ENCODE measurements at regions of chr7 and their contacts with region 1.

Region 1: DNA sequence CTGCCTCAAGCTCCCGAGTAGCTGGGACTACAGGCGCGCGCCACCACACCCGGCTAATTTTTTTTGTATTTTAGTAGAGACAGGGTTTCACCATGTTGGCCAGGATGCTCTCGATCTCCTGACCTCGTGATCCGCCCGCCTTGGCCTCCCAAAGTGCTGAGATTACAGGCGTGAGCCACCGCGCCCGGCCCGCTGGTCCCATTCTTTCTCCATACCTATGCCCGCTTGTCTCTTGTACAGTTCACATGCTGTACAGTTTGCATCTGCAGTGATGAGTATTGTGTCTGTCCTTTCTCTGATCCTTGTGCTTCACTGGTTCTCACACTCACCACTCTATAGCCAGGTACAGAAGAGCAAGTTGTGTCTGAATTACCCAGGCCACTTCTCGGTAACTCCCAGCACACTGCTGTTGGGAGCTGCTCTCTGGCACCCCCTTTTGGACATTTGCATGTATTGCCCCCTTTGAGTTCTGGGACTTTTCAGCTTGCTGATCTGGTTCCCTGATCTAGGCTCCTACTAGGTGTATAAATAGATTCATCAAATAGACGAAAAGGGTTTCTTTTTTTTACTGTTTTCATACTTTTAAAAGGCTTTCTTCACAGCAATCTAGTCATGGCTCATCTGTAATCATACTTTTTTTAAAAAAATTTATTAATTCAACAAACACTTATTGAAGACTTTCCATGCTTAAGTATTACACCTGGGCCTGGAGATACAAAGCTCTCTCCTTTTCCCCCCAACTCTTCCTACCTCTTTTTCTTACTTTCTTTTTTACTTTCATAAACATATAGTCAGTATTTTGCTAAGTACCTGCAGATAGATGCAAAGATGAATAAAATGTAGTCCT is 53.5 kb downstream of the AOAH start:
- DNase-seq: peak; percentile 75
- ATAC-seq: peak; percentile 93
- H3K4me3 Mint-ChIP-seq: no peak overlapping the region
- H3K27ac Mint-ChIP-seq: no peak overlapping the region
- H3K4me1 Mint-ChIP-seq: peaks cover 13% of the 10 kb centered on the region
- H3K27me3 Mint-ChIP-seq: no peaks in the 10 kb centered on the region
- CTCF ChIP-seq: peak; percentile 91

Region 2: GRCh38 chr7:36487756-36488336 is 183.0 kb before region 1 on chr7:
- CTCF ChIA-PET with region 1: interaction called, 25 read pairs
- POLR2A ChIA-PET with region 1: no interaction called
- DNase-seq: no peak
- ATAC-seq: peak; percentile 57; the same call in 1 of the 2 replicates
- H3K4me3 Mint-ChIP-seq: no peak overlapping the region
- H3K27ac Mint-ChIP-seq: no peak overlapping the region
- H3K4me1 Mint-ChIP-seq: no peaks in the 10 kb centered on the region
- H3K27me3 Mint-ChIP-seq: no peaks in the 10 kb centered on the region
- CTCF ChIP-seq: peak; percentile 54

Region 3: DNA sequence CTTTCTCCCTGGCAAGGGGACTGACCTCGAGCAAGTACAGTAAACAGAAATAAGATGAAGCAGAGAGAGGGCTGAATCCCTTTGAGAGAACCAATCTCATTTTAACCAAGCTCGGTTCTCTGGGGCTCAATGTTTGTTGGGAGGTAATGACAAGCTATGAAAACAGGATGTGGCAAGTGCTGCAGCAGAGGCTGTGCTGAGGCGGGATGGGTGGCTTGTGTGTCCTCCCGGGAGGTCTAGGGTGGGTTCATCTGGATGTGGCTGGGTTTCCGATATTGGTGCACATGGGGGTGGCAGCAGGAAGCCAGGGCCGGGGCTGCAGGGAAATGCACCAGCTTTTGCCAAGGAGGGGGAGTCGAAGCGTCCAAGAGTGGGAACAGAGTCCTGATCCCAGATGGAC is 31.0 kb before region 1 on chr7:
- CTCF ChIA-PET with region 1: interaction called, 12 read pairs
- POLR2A ChIA-PET with region 1: no interaction called
- DNase-seq: no peak
- ATAC-seq: no peak
- H3K4me3 Mint-ChIP-seq: no peak overlapping the region
- H3K27ac Mint-ChIP-seq: no peak overlapping the region
- H3K4me1 Mint-ChIP-seq: peaks cover 29% of the 10 kb centered on the region
- H3K27me3 Mint-ChIP-seq: no peaks in the 10 kb centered on the region
- CTCF ChIP-seq: no peak

Region 4: GRCh38 chr7:36659172-36659516 is 11.7 kb before region 1 on chr7:
- CTCF ChIA-PET with region 1: interaction called, 41 read pairs
- POLR2A ChIA-PET with region 1: no interaction called
- DNase-seq: no peak
- ATAC-seq: peak; percentile 62
- H3K4me3 Mint-ChIP-seq: no peak overlapping the region
- H3K27ac Mint-ChIP-seq: peak overlapping the region; percentile 79
- H3K4me1 Mint-ChIP-seq: peaks cover 78% of the 10 kb centered on the region
- H3K27me3 Mint-ChIP-seq: no peaks in the 10 kb centered on the region
- CTCF ChIP-seq: no peak

Region 5: GRCh38 chr7:36794689-36795088 is 123.9 kb after region 1 on chr7:
- CTCF ChIA-PET with region 1: no interaction called
- POLR2A ChIA-PET with region 1: no interaction called
- DNase-seq: peak; percentile 19
- ATAC-seq: peak; percentile 78
- H3K4me3 Mint-ChIP-seq: no peak overlapping the region
- H3K27ac Mint-ChIP-seq: no peak overlapping the region
- H3K4me1 Mint-ChIP-seq: peaks cover 6% of the 10 kb centered on the region; the same call in 1 of the 2 replicates
- H3K27me3 Mint-ChIP-seq: no peaks in the 10 kb centered on the region; the same call in 1 of the 2 replicates
- CTCF ChIP-seq: no peak